Activated CD4-positive, alpha-beta memory T cell treated with anti-CD3 and anti-CD28 coated beads for 36 hours (primary cell): ENCODE measurements at regions of chr2 and their contacts with region 1.

Region 1: DNA sequence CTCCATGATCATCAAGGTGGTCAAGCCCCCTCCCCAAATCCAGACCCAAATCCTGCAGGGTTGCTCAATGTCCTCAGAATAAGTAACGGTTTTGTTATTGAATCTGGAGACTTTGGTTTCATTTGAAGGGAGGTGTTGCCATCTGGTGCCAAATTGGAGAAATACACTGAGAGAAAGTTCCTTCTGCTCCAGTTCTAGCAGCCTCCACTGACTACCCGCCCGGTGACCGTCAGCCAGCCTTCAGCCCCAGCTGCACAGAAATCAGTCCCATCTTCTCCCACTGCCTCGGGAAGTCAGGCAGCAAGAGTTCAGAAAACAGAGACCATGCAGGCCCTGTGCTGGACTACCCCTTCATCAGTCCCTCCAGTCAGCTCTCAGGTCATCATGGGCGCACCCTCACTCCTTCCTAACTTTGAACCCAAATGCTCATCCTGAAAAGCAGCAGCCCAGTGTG is 38.7 kb downstream of the PKDCC start:
- DNase-seq: peak; percentile 41
- H3K4me3 Mint-ChIP-seq: no peak overlapping the region
- H3K27ac Mint-ChIP-seq: no peak overlapping the region
- H3K4me1 Mint-ChIP-seq: peaks cover 4% of the 10 kb centered on the region
- H3K27me3 Mint-ChIP-seq: no peaks in the 10 kb centered on the region

Region 2: GRCh38 chr2:41840702-41841551 is 245.6 kb before region 1 on chr2:
- CTCF ChIA-PET with region 1: interaction called, 72 read pairs
- POLR2A ChIA-PET with region 1: no interaction called
- intact Hi-C with region 1: loop called (anchors 1 kb)
- DNase-seq: peak; percentile 99
- H3K4me3 Mint-ChIP-seq: peak overlapping the region; percentile 85
- H3K27ac Mint-ChIP-seq: peak overlapping the region; percentile 81
- H3K4me1 Mint-ChIP-seq: peaks cover 6% of the 10 kb centered on the region
- H3K27me3 Mint-ChIP-seq: peaks cover 8% of the 10 kb centered on the region

Region 3: DNA sequence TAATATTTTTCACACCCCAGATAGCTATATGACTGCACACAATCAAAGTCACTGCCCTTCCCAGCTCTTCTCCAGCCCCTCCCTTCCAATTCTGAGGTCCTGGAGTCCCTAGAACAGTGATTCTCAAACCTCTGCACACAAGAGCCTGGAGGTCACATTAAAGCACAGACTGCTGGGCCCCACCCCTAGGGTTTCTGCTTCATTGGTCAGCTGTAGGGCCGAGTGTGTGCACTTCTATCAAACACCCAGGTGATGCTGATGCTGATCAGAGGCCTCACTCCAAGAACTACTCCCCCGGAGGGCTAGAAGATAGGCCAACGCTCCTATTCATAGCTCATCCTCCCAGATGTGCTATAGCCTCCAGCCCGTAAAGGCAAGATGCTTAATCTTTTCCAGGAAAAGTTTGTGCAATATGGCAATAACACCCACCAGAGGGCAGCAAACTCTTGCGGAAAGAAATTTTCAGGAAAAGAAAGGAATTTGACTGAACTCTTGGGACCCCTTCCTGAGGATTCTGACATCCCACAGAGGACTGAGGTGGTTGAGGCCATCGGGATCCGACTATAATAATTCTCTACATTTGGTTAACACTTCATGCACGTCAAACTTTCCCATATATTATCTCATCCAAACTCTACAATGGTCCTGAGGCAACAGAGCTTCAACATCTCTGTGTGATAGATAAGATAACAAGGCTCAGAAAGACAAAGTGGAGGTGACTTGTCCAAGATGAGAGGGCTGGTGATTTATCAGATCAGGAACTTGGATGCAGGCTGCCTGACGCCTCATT is 232.9 kb before region 1 on chr2:
- CTCF ChIA-PET with region 1: interaction called, 97 read pairs
- POLR2A ChIA-PET with region 1: no interaction called
- intact Hi-C with region 1: loop called (anchors 1 kb)
- DNase-seq: no peak
- H3K4me3 Mint-ChIP-seq: no peak overlapping the region
- H3K27ac Mint-ChIP-seq: no peak overlapping the region
- H3K4me1 Mint-ChIP-seq: peaks cover 12% of the 10 kb centered on the region
- H3K27me3 Mint-ChIP-seq: peaks cover 13% of the 10 kb centered on the region

Region 4: DNA sequence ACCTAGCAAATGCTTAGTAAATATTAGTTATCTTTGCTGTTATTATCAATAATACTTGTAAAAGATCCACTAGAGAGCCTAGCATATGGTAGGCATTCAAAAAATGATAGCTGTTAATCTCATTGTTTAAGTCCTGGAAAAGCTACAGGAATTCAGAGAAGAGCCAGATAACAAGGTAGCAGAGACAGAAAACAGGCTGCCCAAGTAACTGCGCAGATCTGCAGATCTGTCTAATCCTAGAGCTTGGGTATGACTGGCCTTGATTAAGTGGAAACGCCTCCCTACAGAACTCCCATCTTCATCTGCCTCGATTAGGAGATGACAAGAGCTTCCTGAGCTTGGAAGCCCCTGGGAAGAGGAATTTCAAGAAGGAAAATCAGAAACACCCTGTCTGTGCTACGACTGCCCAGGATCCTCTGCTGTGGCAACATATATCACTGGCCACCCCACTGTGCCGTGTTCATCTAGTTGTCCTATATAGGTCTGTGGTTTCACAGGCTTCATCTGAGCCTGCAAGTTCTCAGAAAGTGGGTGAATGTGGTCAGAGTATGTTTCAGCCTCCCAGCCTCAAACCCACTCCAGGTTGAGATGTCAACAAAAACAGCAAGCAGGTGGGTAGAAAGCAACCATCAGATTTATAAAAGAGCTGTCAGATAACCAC is 190.2 kb before region 1 on chr2:
- CTCF ChIA-PET with region 1: interaction called, 17 read pairs
- POLR2A ChIA-PET with region 1: no interaction called
- intact Hi-C with region 1: no loop called
- DNase-seq: peak; percentile 36
- H3K4me3 Mint-ChIP-seq: no peak overlapping the region
- H3K27ac Mint-ChIP-seq: no peak overlapping the region
- H3K4me1 Mint-ChIP-seq: peaks cover 15% of the 10 kb centered on the region
- H3K27me3 Mint-ChIP-seq: no peaks in the 10 kb centered on the region

Region 5: GRCh38 chr2:42328148-42328833 is 241.8 kb after region 1 on chr2:
- CTCF ChIA-PET with region 1: interaction called, 16 read pairs
- POLR2A ChIA-PET with region 1: no interaction called
- intact Hi-C with region 1: loop called (anchors 2 kb)
- DNase-seq: no peak
- H3K4me3 Mint-ChIP-seq: no peak overlapping the region
- H3K27ac Mint-ChIP-seq: peak overlapping the region; percentile 54
- H3K4me1 Mint-ChIP-seq: peaks cover 5% of the 10 kb centered on the region
- H3K27me3 Mint-ChIP-seq: no peaks in the 10 kb centered on the region